Activated CD4-positive, alpha-beta T cell treated with anti-CD3 and anti-CD28 coated beads, Interleukin-2, amount 10 ng/mL, durations not matched to agents 24 days and 14 days (primary cell): ENCODE measurements at regions of chr4 and their contacts with region 1.

Region 1: DNA sequence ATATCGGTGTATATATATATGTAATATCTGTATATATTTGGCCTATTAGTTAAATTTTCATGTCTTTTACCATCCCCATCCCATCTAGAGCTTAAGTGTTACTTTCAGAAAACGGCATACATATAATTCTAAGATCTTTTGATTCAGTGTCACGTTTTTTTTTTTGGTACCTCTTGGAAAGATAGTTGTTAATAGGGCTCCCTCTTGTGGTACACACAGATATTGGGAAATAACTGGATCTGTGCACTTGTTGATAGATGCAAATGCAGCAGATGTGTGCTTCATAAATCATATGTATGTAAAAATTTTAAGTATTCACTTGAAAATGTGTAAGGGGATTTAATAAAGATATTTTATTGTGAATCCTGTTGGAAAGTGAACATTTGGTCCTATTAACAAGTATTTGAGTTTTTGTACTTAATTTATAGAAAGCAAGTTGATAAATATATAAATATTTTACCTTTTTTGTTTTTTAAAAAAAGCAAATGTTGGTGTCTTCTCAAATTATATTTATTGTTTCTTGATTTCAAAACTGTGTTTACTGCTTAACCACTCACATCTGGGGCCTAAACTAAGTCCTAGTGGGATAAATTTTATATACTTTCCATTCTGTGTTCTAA is 74.7 kb downstream of the PAQR3 start:
- DNase-seq: peak; percentile 81
- H3K4me3 Mint-ChIP-seq: no peak overlapping the region
- H3K27ac Mint-ChIP-seq: no peak overlapping the region
- H3K4me1 Mint-ChIP-seq: peaks cover 4% of the 10 kb centered on the region
- H3K27me3 Mint-ChIP-seq: no peaks in the 10 kb centered on the region

Region 2: GRCh38 chr4:77959566-77960338 is 904.8 kb before region 1 on chr4:
- intact Hi-C with region 1: loop called (anchors 5 kb)
- DNase-seq: peak; percentile 61
- H3K4me3 Mint-ChIP-seq: no peak overlapping the region
- H3K27ac Mint-ChIP-seq: no peak overlapping the region
- H3K4me1 Mint-ChIP-seq: peaks cover 6% of the 10 kb centered on the region
- H3K27me3 Mint-ChIP-seq: no peaks in the 10 kb centered on the region

Region 3: GRCh38 chr4:78320349-78320935 is 544.1 kb before region 1 on chr4:
- intact Hi-C with region 1: loop called (anchors 10 kb)
- DNase-seq: peak; percentile 51
- H3K4me3 Mint-ChIP-seq: peak overlapping the region; percentile 1
- H3K27ac Mint-ChIP-seq: no peak overlapping the region
- H3K4me1 Mint-ChIP-seq: peaks cover 6% of the 10 kb centered on the region
- H3K27me3 Mint-ChIP-seq: peaks cover 17% of the 10 kb centered on the region

Region 4: GRCh38 chr4:78446619-78447018 is 417.9 kb before region 1 on chr4:
- intact Hi-C with region 1: no loop called
- DNase-seq: no peak
- H3K4me3 Mint-ChIP-seq: no peak overlapping the region
- H3K27ac Mint-ChIP-seq: no peak overlapping the region
- H3K4me1 Mint-ChIP-seq: no peaks in the 10 kb centered on the region
- H3K27me3 Mint-ChIP-seq: peaks cover 8% of the 10 kb centered on the region

Region 5: DNA sequence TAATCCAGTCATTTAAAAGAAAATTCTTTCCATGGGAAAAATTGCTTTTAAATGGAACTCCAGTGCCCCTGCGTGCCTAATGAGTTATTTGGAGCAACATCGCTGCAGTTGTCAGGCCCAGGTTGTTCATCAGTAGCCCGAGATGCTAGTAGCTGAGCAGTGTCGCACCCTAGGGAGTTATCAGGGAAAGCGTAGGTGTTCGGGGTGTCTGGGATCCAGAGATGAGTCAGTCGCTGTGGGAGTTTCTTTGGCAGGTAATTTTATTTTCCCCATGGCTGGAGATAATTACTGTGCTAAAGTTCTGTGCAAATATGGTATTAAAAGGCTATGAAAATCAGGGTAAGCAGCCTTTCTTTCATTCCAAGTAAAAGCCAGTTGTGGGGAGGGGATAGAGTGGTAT is 263.5 kb before region 1 on chr4:
- intact Hi-C with region 1: no loop called
- DNase-seq: no peak
- H3K4me3 Mint-ChIP-seq: no peak overlapping the region
- H3K27ac Mint-ChIP-seq: no peak overlapping the region
- H3K4me1 Mint-ChIP-seq: no peaks in the 10 kb centered on the region
- H3K27me3 Mint-ChIP-seq: peaks cover 3% of the 10 kb centered on the region

Region 6: DNA sequence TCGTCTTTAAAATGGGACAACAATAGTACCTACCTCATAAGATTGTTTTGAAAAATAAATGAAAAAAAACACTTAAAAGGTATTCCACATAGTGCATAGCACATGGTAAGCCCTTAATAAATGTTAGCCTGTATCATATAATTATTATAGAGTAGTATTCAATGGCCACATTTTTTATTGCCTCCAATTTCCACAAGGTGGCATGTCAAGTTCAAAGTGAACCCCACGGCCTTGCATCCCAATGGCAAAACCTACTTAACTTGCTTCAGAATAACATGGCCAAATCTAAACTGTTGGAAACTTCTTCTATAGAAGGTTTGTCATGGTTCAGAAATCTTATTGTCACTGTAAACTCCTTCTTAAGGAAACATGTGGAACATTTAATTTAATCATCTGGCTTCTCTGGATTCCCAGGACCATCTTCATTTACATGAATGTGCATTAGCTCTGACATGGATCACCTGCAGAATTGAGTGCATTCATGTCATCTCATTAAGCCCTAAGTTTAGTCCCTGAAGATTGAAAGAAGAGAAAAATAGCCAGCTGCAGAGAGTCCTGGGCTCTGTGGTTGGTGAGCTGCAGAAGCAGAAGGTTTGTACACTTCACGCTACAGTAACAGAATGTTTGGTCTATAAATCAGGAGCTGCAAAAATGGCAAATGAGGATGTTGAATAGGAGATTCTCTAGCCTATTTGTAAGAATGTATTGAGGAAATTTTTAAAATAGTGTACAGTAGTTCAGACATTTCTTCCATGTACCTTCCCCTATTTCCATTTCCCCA is 251.9 kb before region 1 on chr4:
- intact Hi-C with region 1: loop called (anchors 1 kb)
- DNase-seq: peak; percentile 66
- H3K4me3 Mint-ChIP-seq: no peak overlapping the region
- H3K27ac Mint-ChIP-seq: no peak overlapping the region
- H3K4me1 Mint-ChIP-seq: peaks cover 42% of the 10 kb centered on the region
- H3K27me3 Mint-ChIP-seq: peaks cover 2% of the 10 kb centered on the region

Region 7: GRCh38 chr4:78656968-78657445 is 207.5 kb before region 1 on chr4:
- intact Hi-C with region 1: loop called (anchors 5 kb)
- DNase-seq: peak; percentile 80
- H3K4me3 Mint-ChIP-seq: peak overlapping the region; percentile 61
- H3K27ac Mint-ChIP-seq: peak overlapping the region; percentile 65
- H3K4me1 Mint-ChIP-seq: peaks cover 38% of the 10 kb centered on the region
- H3K27me3 Mint-ChIP-seq: no peaks in the 10 kb centered on the region

Region 8: DNA sequence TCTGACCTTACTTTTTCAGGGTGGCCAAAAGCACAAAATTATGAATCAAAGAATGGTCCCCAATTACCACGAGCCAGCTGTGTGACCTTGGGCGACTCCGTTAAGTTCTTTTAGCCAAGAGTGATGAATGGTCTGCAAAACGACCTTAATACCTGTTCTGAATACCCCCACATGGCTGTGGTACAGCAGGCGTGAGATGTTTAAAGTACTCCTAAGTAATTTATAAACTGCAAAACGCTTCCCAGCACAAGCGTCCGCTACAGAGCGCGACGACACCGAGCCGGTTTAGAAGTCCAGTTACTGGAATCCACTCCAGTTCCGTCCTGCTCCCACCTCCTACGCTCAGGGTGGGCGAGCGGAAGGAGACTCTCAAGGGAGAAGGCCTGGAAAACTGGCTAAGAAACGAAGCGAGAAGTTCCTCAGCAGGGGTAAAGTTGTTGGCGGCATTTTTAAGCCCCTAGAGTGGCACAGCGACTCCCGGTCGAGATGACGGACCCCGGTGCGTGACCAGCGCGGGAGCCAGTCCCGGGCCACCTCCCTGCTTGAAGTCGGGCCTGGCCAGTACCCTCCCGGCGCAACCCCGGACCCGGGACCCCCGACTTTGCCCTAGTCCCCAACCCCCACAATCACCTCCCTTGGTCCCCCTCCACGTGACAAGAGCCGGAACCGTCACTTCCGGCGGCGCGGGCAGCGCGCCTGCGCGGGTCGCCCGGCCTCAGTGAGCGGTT is 89.0 kb before region 1 on chr4:
- intact Hi-C with region 1: loop called (anchors 1 kb)
- DNase-seq: peak; percentile 97
- H3K4me3 Mint-ChIP-seq: peak overlapping the region; percentile 93
- H3K27ac Mint-ChIP-seq: peak overlapping the region; percentile 98
- H3K4me1 Mint-ChIP-seq: peaks cover 34% of the 10 kb centered on the region
- H3K27me3 Mint-ChIP-seq: no peaks in the 10 kb centered on the region

Region 9: GRCh38 chr4:78971326-78971725 is 106.8 kb after region 1 on chr4:
- intact Hi-C with region 1: no loop called
- DNase-seq: no peak
- H3K4me3 Mint-ChIP-seq: no peak overlapping the region
- H3K27ac Mint-ChIP-seq: no peak overlapping the region
- H3K4me1 Mint-ChIP-seq: no peaks in the 10 kb centered on the region
- H3K27me3 Mint-ChIP-seq: peaks cover 8% of the 10 kb centered on the region